ENCODE measurements at regions of chr17 and their contacts with region 1.

Region 1: GRCh38 chr17:73192894-73193701 is at the start of gene COG1:
- DNase-seq: peak; percentile 82
- ATAC-seq: peak; percentile 65
- H3K4me3 Mint-ChIP-seq: peak within 1 kb of the TSS; percentile 96
- H3K27ac Mint-ChIP-seq: peak within 1 kb of the TSS; percentile 97
- H3K4me1 Mint-ChIP-seq: peaks cover 21% of the 10 kb centered on the region
- H3K27me3 Mint-ChIP-seq: no peaks in the 10 kb centered on the region
- CTCF ChIP-seq: no peak
- total RNA-seq, gene COG1: 19.2 to 22.6 TPM (median 19.5 TPM) in 3 replicates

Region 2: DNA sequence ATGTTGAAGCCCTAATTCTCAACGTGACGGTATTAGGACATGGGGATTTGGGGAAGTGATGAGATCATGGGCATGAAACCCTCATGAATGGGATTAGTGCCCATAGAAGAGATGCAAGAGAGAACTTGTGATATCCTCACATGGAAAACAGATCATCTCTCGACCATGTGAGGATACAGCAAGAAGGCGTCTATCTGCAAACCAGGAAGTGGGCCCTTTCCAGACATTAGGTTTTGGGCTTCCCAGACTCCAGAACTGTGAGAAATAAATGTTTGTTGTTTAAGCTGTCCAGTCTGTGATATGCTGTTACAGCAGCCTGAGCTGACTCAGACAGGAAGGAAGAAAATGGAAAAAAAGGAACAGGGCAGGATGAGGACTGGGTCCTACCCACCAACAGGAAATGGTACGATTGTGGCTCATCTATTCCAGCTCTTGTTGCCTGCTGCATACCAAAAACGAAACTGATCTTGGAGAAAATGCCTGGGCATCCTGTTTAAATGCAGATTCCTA is 50.2 kb before region 1 on chr17:
- CTCF ChIA-PET with region 1: no interaction called
- POLR2A ChIA-PET with region 1: no interaction called
- DNase-seq: no peak
- ATAC-seq: no peak
- H3K4me3 Mint-ChIP-seq: no peak overlapping the region
- H3K27ac Mint-ChIP-seq: no peak overlapping the region
- H3K4me1 Mint-ChIP-seq: 0 out of 2 replicates have a peak, but pooled peaks cover 4% of the 10 kb centered on the region
- H3K27me3 Mint-ChIP-seq: peaks cover 2% of the 10 kb centered on the region; the same call in 1 of the 2 replicates
- CTCF ChIP-seq: no peak

Region 3: DNA sequence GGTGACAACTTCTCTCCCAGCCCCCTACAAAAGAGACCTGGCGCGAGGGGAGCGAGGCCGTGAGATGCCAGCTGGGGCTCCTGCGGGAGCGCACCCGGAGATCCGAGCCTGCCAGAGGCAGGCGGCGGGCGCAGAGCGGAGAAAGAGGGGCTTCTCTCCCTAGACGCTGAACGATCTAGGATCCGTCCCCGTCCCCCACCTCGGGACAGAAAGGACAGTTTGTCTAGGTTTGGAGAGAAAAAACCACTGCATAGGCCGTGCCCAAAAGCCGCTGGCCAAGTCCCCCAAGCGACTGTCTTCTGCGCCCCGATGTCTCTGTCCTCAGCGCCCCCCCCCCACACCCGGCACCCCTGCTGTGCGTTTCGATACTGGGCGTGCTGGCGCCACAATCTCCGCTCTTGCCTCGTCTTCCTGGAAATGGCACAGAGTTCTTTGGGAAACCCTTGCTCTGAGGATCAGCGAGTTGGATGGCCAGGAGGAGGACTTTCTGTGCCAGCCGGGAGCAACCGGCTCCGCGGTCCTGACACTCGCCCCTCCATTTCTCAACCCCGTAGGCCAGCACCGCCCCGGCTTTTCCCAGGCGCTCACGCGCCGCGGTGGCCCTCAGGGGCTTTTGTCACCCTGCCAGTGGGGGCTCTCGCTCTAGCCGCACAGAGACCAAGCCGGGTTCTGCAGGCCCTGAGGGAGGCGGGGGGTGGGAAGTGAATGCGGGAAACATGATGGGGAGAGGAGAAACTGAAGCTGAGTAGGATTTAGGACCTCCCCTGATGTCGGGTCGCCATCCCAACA is 27.3 kb before region 1 on chr17:
- CTCF ChIA-PET with region 1: interaction called, 13 read pairs
- POLR2A ChIA-PET with region 1: interaction called, 4 read pairs
- DNase-seq: peak; percentile 38
- ATAC-seq: peak; percentile 2; the same call in 1 of the 2 replicates
- H3K4me3 Mint-ChIP-seq: peak overlapping the region; percentile 85
- H3K27ac Mint-ChIP-seq: no peak overlapping the region
- H3K4me1 Mint-ChIP-seq: peaks cover 50% of the 10 kb centered on the region
- H3K27me3 Mint-ChIP-seq: peaks cover 74% of the 10 kb centered on the region
- CTCF ChIP-seq: no peak

Region 4: DNA sequence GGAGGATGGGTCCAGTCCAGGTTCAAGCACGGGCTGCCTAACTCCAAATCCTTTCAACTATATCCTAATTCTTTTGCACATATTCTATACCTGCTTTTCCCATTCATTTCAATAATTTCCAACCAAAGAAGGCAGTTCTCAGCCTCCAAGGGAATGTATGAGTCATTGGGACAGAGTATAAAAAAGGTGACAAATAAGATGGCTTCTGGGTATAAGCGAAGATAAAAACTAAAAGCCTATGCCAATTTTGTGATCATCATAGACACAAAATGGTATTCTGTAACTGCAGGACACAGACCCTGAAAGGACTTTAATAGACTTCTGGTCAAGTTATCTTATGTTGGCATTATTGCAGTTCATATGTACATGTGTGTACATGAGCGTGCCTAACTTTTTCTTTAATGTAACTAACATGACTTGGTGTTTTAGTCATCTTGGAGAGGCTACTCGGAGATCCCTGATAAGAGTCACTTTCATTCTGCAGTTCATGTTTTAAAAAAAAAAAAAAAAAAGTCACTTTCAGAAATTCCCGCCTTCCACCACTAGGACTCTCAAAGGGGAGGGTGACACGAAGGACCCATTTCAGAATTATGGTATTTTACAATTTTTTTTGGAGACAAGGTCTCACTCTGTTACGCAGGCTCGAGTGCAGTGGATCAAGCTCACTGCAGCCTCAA is 17.0 kb after region 1 on chr17:
- CTCF ChIA-PET with region 1: interaction called, 16 read pairs
- POLR2A ChIA-PET with region 1: interaction called, 3 read pairs
- DNase-seq: no peak
- ATAC-seq: no peak
- H3K4me3 Mint-ChIP-seq: no peak overlapping the region
- H3K27ac Mint-ChIP-seq: no peak overlapping the region; the same call in 1 of the 2 replicates
- H3K4me1 Mint-ChIP-seq: 0 out of 2 replicates have a peak, but pooled peaks cover under 1% of the 10 kb centered on the region
- H3K27me3 Mint-ChIP-seq: no peaks in the 10 kb centered on the region
- CTCF ChIP-seq: peak; percentile 46; the same call in 1 of the 2 replicates